MCF 10A (cell line): ENCODE measurements at regions of chr1 and their contacts with region 1.

Region 1: DNA sequence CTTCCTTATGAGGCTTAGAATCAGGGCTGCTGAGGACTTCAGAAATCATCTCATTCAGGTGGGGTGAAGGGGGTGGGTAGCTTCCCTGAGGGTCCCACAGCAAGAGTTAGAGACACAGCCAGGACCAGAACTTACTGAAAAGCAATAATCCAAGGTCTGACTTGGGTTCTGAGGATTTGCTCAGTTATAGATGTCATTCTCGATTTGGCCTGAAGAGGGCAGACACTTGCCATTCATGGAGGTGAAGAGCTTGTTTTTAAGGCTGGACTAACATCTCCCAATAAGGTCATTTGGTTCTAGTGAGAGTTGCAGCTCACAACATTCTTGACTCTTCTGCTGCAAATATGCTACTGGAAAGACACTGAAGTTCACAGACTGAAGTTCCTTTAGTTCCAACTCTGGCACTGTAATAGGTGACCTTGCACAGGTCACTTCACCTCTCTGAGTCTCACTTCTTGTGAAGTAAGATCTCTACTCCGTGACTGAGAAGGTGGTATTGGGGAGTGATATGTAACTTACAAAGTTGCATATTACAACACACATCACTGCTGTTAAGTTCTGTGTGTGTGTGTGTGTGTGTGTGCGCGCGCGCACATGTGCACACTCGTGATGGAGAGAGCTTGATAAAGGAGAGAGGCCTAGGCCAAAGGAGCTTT is 69.8 kb upstream of the DIRAS3 start:
- DNase-seq: peak; percentile 71
- H3K4me3 Mint-ChIP-seq: no peak overlapping the region
- H3K27ac Mint-ChIP-seq: no peak overlapping the region
- H3K4me1 Mint-ChIP-seq: peaks cover 5% of the 10 kb centered on the region
- H3K27me3 Mint-ChIP-seq: no peaks in the 10 kb centered on the region
- CTCF ChIP-seq: peak; percentile 82

Region 2: GRCh38 chr1:67614511-67614934 is 505.7 kb before region 1 on chr1:
- CTCF ChIA-PET with region 1: no interaction called
- POLR2A ChIA-PET with region 1: no interaction called
- intact Hi-C with region 1: no loop called
- DNase-seq: peak; percentile 77
- H3K4me3 Mint-ChIP-seq: no peak overlapping the region
- H3K27ac Mint-ChIP-seq: peak overlapping the region; percentile 57
- H3K4me1 Mint-ChIP-seq: peaks cover 36% of the 10 kb centered on the region
- H3K27me3 Mint-ChIP-seq: no peaks in the 10 kb centered on the region
- CTCF ChIP-seq: no peak

Region 3: GRCh38 chr1:67853704-67854103 is 266.6 kb before region 1 on chr1:
- CTCF ChIA-PET with region 1: interaction called, 39 read pairs
- POLR2A ChIA-PET with region 1: no interaction called
- intact Hi-C with region 1: no loop called
- DNase-seq: peak; percentile 71
- H3K4me3 Mint-ChIP-seq: no peak overlapping the region
- H3K27ac Mint-ChIP-seq: no peak overlapping the region
- H3K4me1 Mint-ChIP-seq: peaks cover 16% of the 10 kb centered on the region
- H3K27me3 Mint-ChIP-seq: no peaks in the 10 kb centered on the region
- CTCF ChIP-seq: peak; percentile 92

Region 4: DNA sequence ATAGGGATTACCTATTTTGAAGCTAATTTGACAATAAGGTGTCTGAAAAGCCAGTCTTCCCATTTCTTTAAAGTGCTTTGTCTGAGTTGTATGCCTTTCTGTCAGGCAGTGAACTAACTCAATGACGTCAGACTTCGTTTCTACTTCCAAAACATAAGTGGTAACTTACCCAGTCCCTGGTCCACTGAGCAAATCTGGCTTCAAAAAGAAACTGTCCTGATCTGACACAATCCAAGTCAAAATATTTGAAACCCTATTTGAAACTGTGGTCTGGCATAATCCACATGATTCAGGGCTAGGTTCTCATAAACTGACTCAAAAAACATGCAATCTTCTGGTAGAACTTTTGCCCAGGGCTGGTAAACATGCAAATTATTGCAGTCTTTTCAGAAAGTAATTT is 103.9 kb before region 1 on chr1:
- CTCF ChIA-PET with region 1: no interaction called
- POLR2A ChIA-PET with region 1: no interaction called
- intact Hi-C with region 1: no loop called
- DNase-seq: no peak
- H3K4me3 Mint-ChIP-seq: no peak overlapping the region
- H3K27ac Mint-ChIP-seq: no peak overlapping the region
- H3K4me1 Mint-ChIP-seq: no peaks in the 10 kb centered on the region
- H3K27me3 Mint-ChIP-seq: no peaks in the 10 kb centered on the region
- CTCF ChIP-seq: no peak

Region 5: DNA sequence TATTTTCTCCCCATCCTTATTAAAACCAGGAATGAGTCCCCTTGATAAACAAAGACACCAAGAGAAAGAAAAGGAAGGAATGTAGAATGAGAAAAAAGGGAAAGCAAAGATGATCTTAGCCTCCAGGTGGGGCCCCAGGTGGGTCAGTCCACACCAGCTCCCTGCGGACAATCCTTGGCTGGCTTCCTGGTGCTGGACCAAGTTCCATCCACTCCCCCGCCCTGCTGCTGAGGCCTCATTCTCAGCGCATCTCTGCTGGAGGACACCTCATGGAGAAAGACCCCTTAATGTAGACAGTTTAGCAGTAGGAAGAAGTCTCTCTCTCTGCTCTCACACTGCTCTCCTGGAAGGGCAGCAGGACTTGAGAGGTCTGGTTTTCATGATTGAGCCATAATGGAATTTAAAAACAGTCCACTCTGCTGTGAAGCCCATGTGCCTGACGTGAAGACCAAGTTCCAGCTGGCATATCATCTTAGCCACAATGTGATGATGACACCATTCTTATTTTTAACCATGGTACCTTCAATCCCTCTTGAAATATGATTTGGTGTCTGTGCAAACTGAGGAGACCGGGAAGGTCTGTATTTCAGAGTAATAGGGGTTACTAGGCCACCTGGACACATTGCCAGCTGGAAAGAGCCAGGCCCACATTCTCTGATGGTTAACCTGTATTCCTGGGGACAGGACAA is 29.0 kb after region 1 on chr1:
- CTCF ChIA-PET with region 1: interaction called, 10 read pairs
- POLR2A ChIA-PET with region 1: no interaction called
- intact Hi-C with region 1: no loop called
- DNase-seq: no peak
- H3K4me3 Mint-ChIP-seq: no peak overlapping the region
- H3K27ac Mint-ChIP-seq: no peak overlapping the region
- H3K4me1 Mint-ChIP-seq: no peaks in the 10 kb centered on the region
- H3K27me3 Mint-ChIP-seq: no peaks in the 10 kb centered on the region
- CTCF ChIP-seq: no peak

Region 6: GRCh38 chr1:68213843-68214242 is 93.6 kb after region 1 on chr1:
- CTCF ChIA-PET with region 1: interaction called, 11 read pairs
- POLR2A ChIA-PET with region 1: no interaction called
- intact Hi-C with region 1: no loop called
- DNase-seq: peak; percentile 86
- H3K4me3 Mint-ChIP-seq: peak overlapping the region; percentile 1
- H3K27ac Mint-ChIP-seq: peak overlapping the region; percentile 84
- H3K4me1 Mint-ChIP-seq: peaks cover 17% of the 10 kb centered on the region
- H3K27me3 Mint-ChIP-seq: no peaks in the 10 kb centered on the region
- CTCF ChIP-seq: no peak

Region 7: GRCh38 chr1:68346188-68346808 is 226.0 kb after region 1 on chr1:
- CTCF ChIA-PET with region 1: interaction called, 599 read pairs
- POLR2A ChIA-PET with region 1: interaction called, 6 read pairs
- intact Hi-C with region 1: loop called (anchors 1 kb)
- DNase-seq: peak; percentile 35
- H3K4me3 Mint-ChIP-seq: no peak overlapping the region
- H3K27ac Mint-ChIP-seq: no peak overlapping the region
- H3K4me1 Mint-ChIP-seq: no peaks in the 10 kb centered on the region
- H3K27me3 Mint-ChIP-seq: peaks cover 8% of the 10 kb centered on the region
- CTCF ChIP-seq: peak; percentile 24

Region 8: DNA sequence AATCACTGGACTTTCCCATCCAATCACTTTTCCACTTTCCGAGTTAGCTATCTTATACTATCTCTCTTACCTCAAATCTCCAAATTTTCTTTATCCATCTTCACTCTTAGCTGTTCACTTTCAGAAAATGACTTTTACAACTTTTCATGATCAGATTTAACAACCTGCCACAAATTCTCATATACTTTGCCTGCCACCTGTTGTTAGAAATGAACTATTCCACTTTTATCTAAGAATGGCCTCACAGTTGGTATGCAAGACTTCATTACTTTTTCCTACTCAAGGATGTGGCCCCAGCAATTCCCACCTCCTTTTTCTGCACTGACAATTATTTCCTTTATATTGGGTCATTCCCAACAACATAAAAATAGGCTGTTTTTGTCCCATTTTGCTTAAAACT is 470.2 kb after region 1 on chr1:
- CTCF ChIA-PET with region 1: no interaction called
- POLR2A ChIA-PET with region 1: no interaction called
- intact Hi-C with region 1: loop called (anchors 5 kb)
- DNase-seq: peak; percentile 11
- H3K4me3 Mint-ChIP-seq: no peak overlapping the region
- H3K27ac Mint-ChIP-seq: no peak overlapping the region
- H3K4me1 Mint-ChIP-seq: no peaks in the 10 kb centered on the region
- H3K27me3 Mint-ChIP-seq: peaks cover 45% of the 10 kb centered on the region
- CTCF ChIP-seq: no peak